ENCODE measurements at regions of chr1 and their contacts with region 1.

Region 1: DNA sequence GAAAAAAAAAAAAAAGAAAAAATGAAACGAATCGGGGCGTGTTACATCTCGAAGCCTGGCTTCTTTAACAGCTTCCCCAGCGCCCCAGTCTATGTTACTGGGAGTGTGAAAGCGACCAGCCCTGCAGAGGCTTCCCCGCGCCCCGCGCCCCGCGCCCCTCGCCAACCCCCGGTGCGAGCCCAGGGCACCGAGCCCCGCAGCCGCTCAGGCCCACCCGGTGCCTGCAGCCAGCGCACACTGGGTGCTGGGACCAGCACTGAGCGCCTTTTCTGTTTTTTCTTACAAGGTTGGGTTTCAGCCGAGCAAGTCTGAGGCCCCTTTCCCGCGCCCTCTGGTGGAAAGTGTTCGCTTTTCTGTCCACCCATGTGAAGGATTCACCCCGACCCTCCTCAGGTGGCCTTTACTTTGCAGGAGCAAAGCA is 42.1 kb upstream of the ZNF496 start:
- DNase-seq: peak; percentile 19 to 72 (median 56)
- ATAC-seq: peak; percentile 79 to 92 (median 82)
- H3K4me3 ChIP-seq: peak overlapping the region in 1 of 2 donors; percentile 10
- H3K4me3 Mint-ChIP-seq: peak overlapping the region in 1 of 3 donors; percentile 65
- H3K27ac ChIP-seq: no peak overlapping the region
- H3K27ac Mint-ChIP-seq: no peak overlapping the region
- H3K4me1 ChIP-seq: peaks cover 0 to 8% of the 10 kb centered on the region in 2 experiments
- H3K4me1 Mint-ChIP-seq: peaks cover 0 to 6% (median 6%) of the 10 kb centered on the region in 3 donors
- H3K27me3 ChIP-seq: peaks cover 0 to 28% of the 10 kb centered on the region in 2 experiments
- H3K27me3 Mint-ChIP-seq: peaks cover 0 to 20% of the 10 kb centered on the region in 2 donors

Region 2: DNA sequence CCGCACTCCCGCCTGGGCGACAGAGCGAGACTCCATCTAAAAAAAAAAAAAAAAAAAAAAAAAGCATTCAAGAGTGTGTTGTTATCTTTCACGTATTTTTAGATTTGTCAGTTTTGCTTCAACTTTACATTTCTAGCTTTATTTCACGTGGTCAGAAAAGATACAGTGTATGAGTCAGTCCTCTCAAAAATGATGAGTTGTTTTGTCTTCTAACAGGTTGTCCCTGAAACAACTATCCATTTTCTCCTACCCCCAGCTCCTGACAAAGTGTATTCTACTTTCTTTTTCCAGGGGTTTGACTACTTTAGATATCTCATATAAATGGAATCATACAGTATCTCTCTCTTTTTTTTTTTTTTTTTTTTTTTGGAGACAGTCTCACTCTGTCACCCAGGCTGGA is 360.3 kb before region 1 on chr1:
- CTCF ChIA-PET with region 1: no interaction called
- POLR2A ChIA-PET with region 1: no interaction called
- DNase-seq: no peak
- ATAC-seq: no peak
- H3K4me3 ChIP-seq: no peak overlapping the region
- H3K4me3 Mint-ChIP-seq: no peak overlapping the region
- H3K27ac ChIP-seq: no peak overlapping the region
- H3K27ac Mint-ChIP-seq: no peak overlapping the region
- H3K4me1 ChIP-seq: no peaks in the 10 kb centered on the region
- H3K4me1 Mint-ChIP-seq: peaks cover under 1 to 1% (median under 1%) of the 10 kb centered on the region in 3 donors
- H3K27me3 ChIP-seq: peaks cover 0 to 8% of the 10 kb centered on the region in 2 experiments
- H3K27me3 Mint-ChIP-seq: peaks cover 1 to 8% of the 10 kb centered on the region in 2 donors

Region 3: GRCh38 chr1:247322849-247323586 is 50.7 kb before region 1 on chr1:
- CTCF ChIA-PET with region 1: interaction called in 1 of 2 experiments, 6 read pairs
- POLR2A ChIA-PET with region 1: interaction called in 1 of 2 experiments, 10 read pairs
- DNase-seq: peak in 10 of 35 experiments; percentile 7 to 56 (median 17)
- ATAC-seq: peak; percentile 47 to 71 (median 56)
- H3K4me3 ChIP-seq: peak overlapping the region; percentile 2 to 33
- H3K4me3 Mint-ChIP-seq: peak overlapping the region in 2 of 3 donors; percentile 55 to 73
- H3K27ac ChIP-seq: peak overlapping the region; percentile 14
- H3K27ac Mint-ChIP-seq: peak overlapping the region in 1 of 2 donors; percentile 90
- H3K4me1 ChIP-seq: peaks cover 28 to 32% of the 10 kb centered on the region in 2 experiments
- H3K4me1 Mint-ChIP-seq: peaks cover 0 to 39% (median 32%) of the 10 kb centered on the region in 3 donors
- H3K27me3 ChIP-seq: no peaks in the 10 kb centered on the region
- H3K27me3 Mint-ChIP-seq: no peaks in the 10 kb centered on the region

Region 4: GRCh38 chr1:247337250-247337746 is 36.4 kb before region 1 on chr1:
- CTCF ChIA-PET with region 1: no interaction called
- POLR2A ChIA-PET with region 1: no interaction called
- DNase-seq: no peak
- ATAC-seq: no peak
- H3K4me3 ChIP-seq: no peak overlapping the region
- H3K4me3 Mint-ChIP-seq: no peak overlapping the region
- H3K27ac ChIP-seq: no peak overlapping the region
- H3K27ac Mint-ChIP-seq: no peak overlapping the region
- H3K4me1 ChIP-seq: peaks cover 0 to 4% of the 10 kb centered on the region in 2 experiments
- H3K4me1 Mint-ChIP-seq: peaks cover 6 to 34% (median 14%) of the 10 kb centered on the region in 3 donors
- H3K27me3 ChIP-seq: peaks cover 0 to 1% of the 10 kb centered on the region in 2 experiments
- H3K27me3 Mint-ChIP-seq: no peaks in the 10 kb centered on the region

Region 5: DNA sequence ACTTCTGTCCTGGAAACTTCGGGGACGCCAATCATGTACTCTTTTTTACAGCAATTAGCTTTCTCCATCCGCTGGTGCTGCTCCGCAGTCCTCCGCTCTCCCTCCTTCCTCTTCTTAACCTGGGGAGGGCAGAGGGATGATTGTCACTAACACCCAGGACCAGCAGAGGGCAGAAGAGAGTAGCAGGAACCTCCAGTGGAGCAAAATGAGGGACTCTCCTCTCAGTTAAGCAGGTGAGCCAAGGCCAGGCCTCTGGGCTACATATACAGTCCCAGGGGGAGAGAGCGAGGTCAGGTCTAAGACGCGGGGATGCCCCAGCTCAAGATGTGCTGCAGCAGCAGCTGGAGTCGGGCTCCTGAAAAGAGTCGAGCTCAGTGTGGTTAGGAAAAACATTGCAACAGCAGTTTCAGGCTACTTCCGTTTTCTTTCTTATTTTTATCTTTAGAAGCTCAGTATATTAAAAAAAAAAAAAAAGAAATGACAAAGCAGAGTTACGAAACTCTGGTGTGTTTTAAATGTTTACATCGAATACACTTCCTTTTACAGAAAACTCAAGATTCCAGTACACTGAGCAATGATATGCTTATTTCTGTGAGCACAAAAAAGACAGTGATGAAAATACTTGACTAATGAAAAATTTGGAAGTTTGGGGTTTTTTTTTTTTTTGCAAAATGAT is 16.5 kb after region 1 on chr1:
- CTCF ChIA-PET with region 1: interaction called, 7 to 23 read pairs
- POLR2A ChIA-PET with region 1: no interaction called
- DNase-seq: peak; percentile 61 to 93 (median 78)
- ATAC-seq: peak; percentile 90 to 97 (median 96)
- H3K4me3 ChIP-seq: peak overlapping the region; percentile 43 to 52
- H3K4me3 Mint-ChIP-seq: peak overlapping the region; percentile 60 to 66 (median 62)
- H3K27ac ChIP-seq: peak overlapping the region; percentile 72
- H3K27ac Mint-ChIP-seq: peak overlapping the region; percentile 87 to 93
- H3K4me1 ChIP-seq: peaks cover 0 to 14% of the 10 kb centered on the region in 2 experiments
- H3K4me1 Mint-ChIP-seq: peaks cover 14 to 15% (median 14%) of the 10 kb centered on the region in 3 donors
- H3K27me3 ChIP-seq: no peaks in the 10 kb centered on the region
- H3K27me3 Mint-ChIP-seq: no peaks in the 10 kb centered on the region

Region 6: GRCh38 chr1:247409869-247410544 is 36.3 kb after region 1 on chr1:
- CTCF ChIA-PET with region 1: interaction called in 1 of 2 experiments, 15 read pairs
- POLR2A ChIA-PET with region 1: no interaction called
- DNase-seq: peak in 9 of 35 experiments; percentile 5 to 53 (median 14)
- ATAC-seq: peak; percentile 59 to 69 (median 62)
- H3K4me3 ChIP-seq: peak overlapping the region in 1 of 2 donors; percentile 21
- H3K4me3 Mint-ChIP-seq: peak overlapping the region; percentile 59 to 78 (median 69)
- H3K27ac ChIP-seq: peak overlapping the region; percentile 60
- H3K27ac Mint-ChIP-seq: peak overlapping the region; percentile 95 to 96
- H3K4me1 ChIP-seq: peaks cover 16 to 38% of the 10 kb centered on the region in 2 experiments
- H3K4me1 Mint-ChIP-seq: peaks cover 41 to 54% (median 44%) of the 10 kb centered on the region in 3 donors
- H3K27me3 ChIP-seq: no peaks in the 10 kb centered on the region
- H3K27me3 Mint-ChIP-seq: no peaks in the 10 kb centered on the region

Region 7: DNA sequence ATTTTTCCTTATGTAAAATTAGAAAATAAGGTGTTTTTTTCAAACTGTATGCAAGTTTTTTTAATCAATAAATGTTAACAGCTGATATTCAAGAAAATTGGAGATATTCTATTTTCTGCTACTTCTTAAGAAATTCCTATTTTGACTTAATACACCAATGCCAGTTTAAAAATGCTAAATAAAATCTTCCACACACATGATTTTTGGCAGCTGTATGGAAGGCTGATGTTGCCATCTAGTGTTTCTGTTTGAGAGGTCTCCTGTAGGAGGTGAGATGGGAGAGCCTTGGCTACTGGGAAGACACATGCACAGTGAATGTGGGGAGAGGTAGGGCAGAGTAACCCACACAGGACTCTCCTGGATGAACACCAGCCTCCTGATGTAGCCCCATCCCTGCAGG is 113.3 kb after region 1 on chr1:
- CTCF ChIA-PET with region 1: interaction called, 17 to 28 read pairs
- POLR2A ChIA-PET with region 1: interaction called in 1 of 2 experiments, 3 read pairs
- DNase-seq: peak in 24 of 35 experiments; percentile 2 to 74 (median 16)
- ATAC-seq: peak; percentile 60 to 87 (median 78)
- H3K4me3 ChIP-seq: no peak overlapping the region
- H3K4me3 Mint-ChIP-seq: no peak overlapping the region
- H3K27ac ChIP-seq: no peak overlapping the region
- H3K27ac Mint-ChIP-seq: no peak overlapping the region
- H3K4me1 ChIP-seq: no peaks in the 10 kb centered on the region
- H3K4me1 Mint-ChIP-seq: no peaks in the 10 kb centered on the region
- H3K27me3 ChIP-seq: peaks cover 0 to 5% of the 10 kb centered on the region in 2 experiments
- H3K27me3 Mint-ChIP-seq: peaks cover 12 to 13% of the 10 kb centered on the region in 2 donors